B cell (primary cell): ENCODE measurements at regions of chr21 and their contacts with region 1.

Region 1: GRCh38 chr21:43718872-43719747 is at the start of gene PDXK:
- DNase-seq: peak; percentile 95
- ATAC-seq: peak; percentile 85
- H3K4me3 ChIP-seq: peak within 1 kb of the TSS; percentile 13 to 88 (median 75)
- H3K4me3 Mint-ChIP-seq: peak within 1 kb of the TSS; percentile 86
- H3K27ac ChIP-seq: peak within 1 kb of the TSS; percentile 55 to 87
- H3K27ac Mint-ChIP-seq: peak within 1 kb of the TSS; percentile 81
- H3K4me1 ChIP-seq: peaks cover 35 to 56% of the 10 kb centered on the region in 2 donors
- H3K4me1 Mint-ChIP-seq: peaks cover 53% of the 10 kb centered on the region
- H3K27me3 ChIP-seq: peaks cover 0 to 23% (median 4%) of the 10 kb centered on the region in 4 experiments
- H3K27me3 Mint-ChIP-seq: no peaks in the 10 kb centered on the region
- CTCF ChIP-seq: peak; percentile 36
- total RNA-seq, gene PDXK: 102 and 108 TPM in 2 replicates

Region 2: DNA sequence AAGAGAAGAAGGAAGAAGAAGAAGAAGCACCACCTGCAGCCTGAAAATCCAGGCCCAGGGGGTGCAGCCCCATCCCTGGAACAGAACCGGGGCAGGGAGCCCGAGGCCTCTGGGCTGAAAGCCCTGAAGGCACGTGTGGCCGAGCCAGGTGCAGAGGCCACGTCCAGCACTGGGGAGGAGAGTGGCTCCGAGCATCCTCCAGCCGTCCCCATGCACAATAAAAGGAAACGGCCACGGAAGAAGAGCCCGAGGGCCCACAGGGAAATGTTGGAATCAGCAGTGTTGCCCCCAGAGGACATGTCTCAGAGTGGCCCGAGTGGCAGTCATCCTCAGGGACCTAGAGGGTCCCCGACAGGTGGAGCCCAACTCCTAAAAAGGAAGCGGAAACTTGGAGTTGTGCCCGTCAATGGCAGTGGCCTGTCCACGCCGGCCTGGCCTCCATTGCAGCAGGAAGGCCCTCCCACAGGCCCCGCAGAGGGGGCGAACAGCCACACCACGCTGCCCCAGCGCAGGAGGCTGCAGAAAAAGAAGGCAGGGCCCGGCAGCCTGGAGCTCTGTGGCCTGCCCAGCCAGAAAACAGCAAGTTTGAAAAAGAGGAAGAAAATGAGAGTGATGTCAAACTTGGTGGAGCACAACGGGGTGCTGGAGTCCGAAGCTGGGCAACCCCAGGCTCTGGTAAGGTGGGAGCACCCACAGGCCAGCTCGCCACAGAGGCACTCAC is 31.4 kb before region 1 on chr21:
- CTCF ChIA-PET with region 1: interaction called, 5 read pairs
- POLR2A ChIA-PET with region 1: interaction called, 4 read pairs
- intact Hi-C with region 1: loop called (anchors 1 kb)
- DNase-seq: peak; percentile 73
- ATAC-seq: peak; percentile 91
- H3K4me3 ChIP-seq: no peak overlapping the region
- H3K4me3 Mint-ChIP-seq: peak overlapping the region; percentile 29
- H3K27ac ChIP-seq: peak overlapping the region; percentile 52 to 67
- H3K27ac Mint-ChIP-seq: peak overlapping the region; percentile 80
- H3K4me1 ChIP-seq: peaks cover 13 to 19% of the 10 kb centered on the region in 2 donors
- H3K4me1 Mint-ChIP-seq: peaks cover 14% of the 10 kb centered on the region
- H3K27me3 ChIP-seq: no peaks in the 10 kb centered on the region
- H3K27me3 Mint-ChIP-seq: no peaks in the 10 kb centered on the region
- CTCF ChIP-seq: no peak

Region 3: GRCh38 chr21:44593598-44594405 is 874.7 kb after region 1 on chr21:
- CTCF ChIA-PET with region 1: no interaction called
- POLR2A ChIA-PET with region 1: no interaction called
- intact Hi-C with region 1: no loop called
- DNase-seq: no peak
- ATAC-seq: no peak
- H3K4me3 ChIP-seq: no peak overlapping the region
- H3K4me3 Mint-ChIP-seq: no peak overlapping the region
- H3K27ac ChIP-seq: no peak overlapping the region
- H3K27ac Mint-ChIP-seq: no peak overlapping the region
- H3K4me1 ChIP-seq: no peaks in the 10 kb centered on the region
- H3K4me1 Mint-ChIP-seq: no peaks in the 10 kb centered on the region
- H3K27me3 ChIP-seq: peaks cover 0 to 3% (median 0%) of the 10 kb centered on the region in 4 experiments
- H3K27me3 Mint-ChIP-seq: peaks cover 24% of the 10 kb centered on the region
- CTCF ChIP-seq: no peak